ENCODE measurements at regions of chr7 and their contacts with region 1.

Region 1: DNA sequence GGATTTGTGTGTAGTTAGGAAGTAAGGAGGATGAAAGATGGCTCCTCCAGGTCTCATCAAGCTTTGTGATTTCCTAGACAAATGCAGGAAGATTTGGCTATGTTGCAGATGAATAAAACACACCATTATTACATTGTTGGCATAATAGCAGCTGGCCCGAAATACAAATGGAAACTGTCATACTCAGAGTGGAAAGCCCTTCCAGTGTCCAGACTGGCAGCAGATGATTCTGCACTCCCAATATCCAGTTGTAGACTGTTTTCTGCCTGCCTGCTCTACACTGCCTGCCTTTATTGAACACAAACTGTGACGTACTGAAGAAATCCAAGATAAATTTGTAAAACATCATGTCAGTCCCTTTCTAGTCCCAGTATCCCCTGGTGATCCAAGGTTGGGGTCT is 99.7 kb upstream of the FZD1 start:
- DNase-seq: no peak
- H3K4me3 ChIP-seq: no peak overlapping the region
- CTCF ChIP-seq: no peak

Region 2: DNA sequence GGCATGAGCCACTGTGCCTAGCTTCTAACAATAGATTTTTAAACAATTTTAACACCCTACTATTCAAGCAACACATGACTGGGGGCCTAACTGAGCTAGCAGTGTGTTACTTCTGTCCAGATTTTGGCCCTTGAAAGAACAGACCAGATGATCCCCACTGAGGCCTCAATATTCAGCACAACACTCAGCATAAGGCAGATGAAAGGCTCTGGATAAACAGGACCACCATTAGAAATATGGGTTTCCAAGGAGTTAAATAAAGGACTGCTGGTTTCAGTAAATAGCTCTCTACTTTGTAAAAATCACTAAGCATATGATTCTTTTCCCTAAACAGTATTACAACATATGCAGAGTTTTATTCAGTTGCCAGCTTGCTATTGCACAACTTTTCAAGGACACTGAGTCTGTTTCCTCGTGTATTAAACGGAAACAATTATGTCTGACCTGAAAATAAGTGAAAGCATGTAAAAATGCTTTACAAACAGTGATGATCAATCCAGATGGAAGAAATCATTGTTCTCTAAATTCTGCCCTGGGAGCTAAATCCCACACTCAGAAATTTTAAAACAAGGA is 76.0 kb after region 1 on chr7:
- in situ Hi-C with region 1: loop called (anchors 5 kb)
- DNase-seq: no peak
- H3K4me3 ChIP-seq: no peak overlapping the region
- CTCF ChIP-seq: no peak

Measured in astrocyte of the cerebellum (primary cell).